Endothelial cell of umbilical vein (primary cell): ENCODE measurements at regions of chr11 and their contacts with region 1.

Region 1: GRCh38 chr11:77127232-77127911 is 674 bp upstream of the MYO7A start:
- DNase-seq: peak; percentile 57
- H3K4me3 ChIP-seq: peak overlapping the region in 2 of 3 experiments; percentile 23 to 24
- H3K27ac ChIP-seq: no peak overlapping the region
- H3K4me1 ChIP-seq: peaks cover 10% of the 10 kb centered on the region
- H3K27me3 ChIP-seq: no peaks in the 10 kb centered on the region
- CTCF ChIP-seq: peak; percentile 99 to 100
- POLR2A ChIP-seq: no peak

Region 2: DNA sequence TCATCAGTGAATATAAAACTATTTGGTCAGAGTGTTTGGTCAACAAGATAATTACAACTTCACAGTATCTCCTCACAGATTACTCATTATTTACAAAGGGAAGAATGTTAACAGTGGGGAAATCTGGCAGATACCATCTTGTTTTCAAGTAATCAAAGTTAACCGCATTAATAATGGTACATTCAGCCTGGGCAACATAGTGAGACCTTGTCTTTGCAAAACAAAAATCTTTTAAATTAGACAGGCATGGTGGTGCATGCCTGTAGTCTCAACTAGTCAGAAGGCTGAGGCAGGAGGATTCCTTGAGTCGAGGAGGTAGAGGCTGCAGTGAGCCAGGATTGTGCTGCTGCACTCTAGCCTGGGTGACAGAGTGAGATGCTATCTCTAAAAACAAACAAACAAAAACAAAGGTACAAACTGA is 188.2 kb before region 1 on chr11:
- CTCF ChIA-PET with region 1: no interaction called
- POLR2A ChIA-PET with region 1: no interaction called
- dilution Hi-C with region 1: no loop called
- intact Hi-C with region 1: no loop called
- DNase-seq: peak; percentile 16
- H3K4me3 ChIP-seq: no peak overlapping the region
- H3K27ac ChIP-seq: no peak overlapping the region
- H3K4me1 ChIP-seq: peaks cover 7% of the 10 kb centered on the region
- H3K27me3 ChIP-seq: no peaks in the 10 kb centered on the region
- CTCF ChIP-seq: no peak
- POLR2A ChIP-seq: no peak

Region 3: GRCh38 chr11:76984747-76985146 is 142.6 kb before region 1 on chr11:
- CTCF ChIA-PET with region 1: no interaction called
- POLR2A ChIA-PET with region 1: no interaction called
- dilution Hi-C with region 1: no loop called
- intact Hi-C with region 1: no loop called
- DNase-seq: no peak
- H3K4me3 ChIP-seq: no peak overlapping the region
- H3K27ac ChIP-seq: no peak overlapping the region
- H3K4me1 ChIP-seq: no peaks in the 10 kb centered on the region
- H3K27me3 ChIP-seq: no peaks in the 10 kb centered on the region
- CTCF ChIP-seq: no peak
- POLR2A ChIP-seq: no peak

Region 4: DNA sequence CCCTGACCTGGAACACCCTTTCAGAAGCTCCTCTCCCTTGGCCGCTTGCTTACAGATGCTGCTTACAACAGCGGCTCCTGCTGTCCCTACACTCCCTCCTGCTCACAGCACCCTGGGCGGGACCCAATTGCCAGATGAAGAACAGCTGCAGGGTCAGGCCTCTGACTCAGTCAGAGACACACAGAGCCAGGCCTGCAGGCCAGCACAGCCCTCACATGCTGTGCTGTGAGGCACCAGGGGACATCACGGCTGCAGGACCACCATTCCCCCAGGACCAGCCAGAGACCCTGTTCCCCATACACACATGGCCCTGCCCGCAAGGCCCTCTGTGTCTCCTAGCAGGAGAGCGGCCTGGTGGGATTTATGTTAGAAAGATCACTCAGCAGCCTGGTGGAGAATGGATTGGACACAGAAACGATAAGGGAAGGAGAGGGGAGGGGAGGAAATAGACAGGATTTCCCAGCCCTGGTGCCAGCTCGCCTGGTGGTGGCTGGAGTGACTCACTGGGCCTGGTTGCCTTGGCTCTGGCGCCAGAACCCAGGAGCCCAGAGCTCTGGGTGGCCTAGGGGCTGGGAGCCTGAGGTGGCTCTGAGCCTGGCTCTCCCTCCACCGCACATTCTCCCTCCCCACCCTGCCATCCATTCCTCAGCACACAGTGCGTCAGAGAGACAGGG is 53.9 kb before region 1 on chr11:
- CTCF ChIA-PET with region 1: no interaction called
- POLR2A ChIA-PET with region 1: no interaction called
- dilution Hi-C with region 1: no loop called
- intact Hi-C with region 1: no loop called
- DNase-seq: peak; percentile 88
- H3K4me3 ChIP-seq: no peak overlapping the region
- H3K27ac ChIP-seq: peak overlapping the region; percentile 80
- H3K4me1 ChIP-seq: peaks cover 30% of the 10 kb centered on the region
- H3K27me3 ChIP-seq: no peaks in the 10 kb centered on the region
- CTCF ChIP-seq: peak; percentile 28 to 46
- POLR2A ChIP-seq: no peak

Region 5: GRCh38 chr11:77107950-77108349 is 19.4 kb before region 1 on chr11:
- CTCF ChIA-PET with region 1: interaction called, 10 read pairs
- POLR2A ChIA-PET with region 1: no interaction called
- dilution Hi-C with region 1: no loop called
- intact Hi-C with region 1: no loop called
- DNase-seq: peak; percentile 60
- H3K4me3 ChIP-seq: no peak overlapping the region
- H3K27ac ChIP-seq: no peak overlapping the region
- H3K4me1 ChIP-seq: peaks cover 17% of the 10 kb centered on the region
- H3K27me3 ChIP-seq: no peaks in the 10 kb centered on the region
- CTCF ChIP-seq: no peak
- POLR2A ChIP-seq: no peak

Region 6: GRCh38 chr11:77147668-77148321 is 20.4 kb after region 1 on chr11:
- CTCF ChIA-PET with region 1: interaction called, 13 read pairs
- POLR2A ChIA-PET with region 1: no interaction called
- dilution Hi-C with region 1: no loop called
- intact Hi-C with region 1: no loop called
- DNase-seq: no peak
- H3K4me3 ChIP-seq: no peak overlapping the region
- H3K27ac ChIP-seq: no peak overlapping the region
- H3K4me1 ChIP-seq: no peaks in the 10 kb centered on the region
- H3K27me3 ChIP-seq: peaks cover 0 to 3% of the 10 kb centered on the region in 2 experiments
- CTCF ChIP-seq: no peak
- POLR2A ChIP-seq: no peak

Region 7: GRCh38 chr11:77187776-77188632 is 60.6 kb after region 1 on chr11:
- CTCF ChIA-PET with region 1: interaction called, 309 read pairs
- POLR2A ChIA-PET with region 1: no interaction called
- dilution Hi-C with region 1: no loop called
- intact Hi-C with region 1: loop called (anchors 1 kb)
- DNase-seq: peak; percentile 75
- H3K4me3 ChIP-seq: no peak overlapping the region
- H3K27ac ChIP-seq: no peak overlapping the region
- H3K4me1 ChIP-seq: no peaks in the 10 kb centered on the region
- H3K27me3 ChIP-seq: no peaks in the 10 kb centered on the region
- CTCF ChIP-seq: peak; percentile 81 to 94
- POLR2A ChIP-seq: no peak

Region 8: GRCh38 chr11:77557554-77557953 is 430.2 kb after region 1 on chr11:
- CTCF ChIA-PET with region 1: interaction called, 14 read pairs
- POLR2A ChIA-PET with region 1: no interaction called
- dilution Hi-C with region 1: no loop called
- intact Hi-C with region 1: loop called (anchors 5 kb)
- DNase-seq: peak; percentile 22
- H3K4me3 ChIP-seq: no peak overlapping the region
- H3K27ac ChIP-seq: no peak overlapping the region
- H3K4me1 ChIP-seq: peaks cover 3% of the 10 kb centered on the region
- H3K27me3 ChIP-seq: no peaks in the 10 kb centered on the region
- CTCF ChIP-seq: peak; percentile 5 to 32
- POLR2A ChIP-seq: no peak